GM12878 (cell line): ENCODE measurements at regions of chr16 and their contacts with region 1.

Region 1: DNA sequence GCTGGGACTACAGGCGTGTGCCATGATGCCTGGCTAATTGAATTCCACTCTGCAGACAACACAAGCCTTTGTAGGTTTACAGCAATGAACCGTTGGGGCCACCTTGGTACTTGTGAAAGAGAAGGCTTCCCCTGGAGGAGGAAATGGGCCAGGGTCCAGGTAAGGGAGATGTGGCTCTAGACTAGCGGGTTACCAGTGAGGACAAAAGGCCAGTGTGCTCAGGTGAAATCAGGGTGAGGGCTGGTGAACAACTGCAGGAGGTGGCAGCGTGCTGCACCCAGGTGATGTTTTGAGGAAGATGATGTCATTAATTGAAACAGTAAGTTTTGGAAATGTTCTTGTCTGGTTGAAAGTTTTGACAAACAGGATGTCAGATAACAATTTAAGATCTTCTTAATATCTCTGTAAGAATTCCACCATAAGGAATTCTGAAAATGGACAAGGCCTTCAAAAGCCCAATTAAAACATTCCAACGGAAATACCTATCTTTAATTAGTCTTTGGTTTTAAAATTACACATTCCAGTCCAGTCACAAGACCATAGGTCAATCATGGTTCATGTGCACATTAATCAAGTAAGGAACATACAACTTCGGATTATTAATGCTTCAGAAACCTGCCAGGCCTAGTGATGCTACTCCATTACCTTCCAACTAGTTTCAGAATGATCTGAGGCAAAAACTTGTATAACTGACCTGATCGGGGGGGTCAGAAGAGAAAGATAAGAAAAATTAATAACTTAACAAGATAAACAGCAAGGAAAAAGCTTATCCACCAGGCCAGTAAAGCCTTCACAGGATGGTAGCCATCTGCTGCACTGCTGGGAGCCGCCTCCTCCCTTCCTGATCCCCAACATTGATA is 6.4 kb downstream of the SDR42E1 start:
- DNase-seq: no peak
- ATAC-seq: no peak
- H3K4me3 ChIP-seq: no peak overlapping the region
- H3K27ac ChIP-seq: no peak overlapping the region
- H3K4me1 ChIP-seq: no peaks in the 10 kb centered on the region
- H3K27me3 ChIP-seq: no peaks in the 10 kb centered on the region
- CTCF ChIP-seq: no peak
- EP300 ChIP-seq: no peak
- POLR2A ChIP-seq: no peak
- RAD21 ChIP-seq: no peak

Region 2: DNA sequence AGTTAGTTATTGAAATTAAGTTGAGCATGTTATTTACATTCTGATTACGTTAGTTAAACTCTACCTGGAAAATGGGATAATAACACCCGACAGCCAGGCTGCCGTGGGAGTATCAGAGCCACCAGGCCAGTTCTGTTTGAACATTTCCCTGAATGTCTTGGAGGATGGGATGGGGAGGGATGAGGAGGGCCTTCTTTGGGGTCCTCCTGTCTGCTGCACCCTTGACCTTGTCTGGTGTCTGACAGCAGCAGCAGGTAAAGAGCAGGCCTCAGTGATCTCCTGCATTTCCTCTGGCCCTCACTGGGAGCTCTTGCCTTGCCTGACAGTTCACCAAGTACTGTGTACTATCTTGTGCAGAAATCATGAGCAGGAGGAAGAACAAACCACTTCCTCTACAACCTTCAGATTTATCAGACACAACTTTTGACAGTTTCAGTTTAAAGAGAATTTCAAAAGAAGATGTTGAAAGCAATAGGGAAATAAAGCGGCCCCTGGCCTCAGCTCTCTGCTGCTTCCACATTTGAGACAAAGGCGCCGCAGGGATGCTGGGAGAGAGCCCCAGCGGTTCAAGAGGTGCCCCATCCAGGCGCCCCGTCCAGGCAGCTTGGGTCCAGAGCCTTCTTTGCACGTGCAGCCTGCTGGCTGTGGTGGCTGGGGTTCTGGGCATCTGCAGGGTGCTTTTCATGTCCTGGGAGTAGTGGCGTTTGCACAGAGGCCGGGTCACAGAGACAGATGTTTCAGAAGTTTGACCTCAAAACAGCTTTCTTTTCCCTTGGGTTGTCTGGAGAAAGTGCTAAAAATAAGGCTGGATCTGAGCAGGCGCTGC is 534.9 kb before region 1 on chr16:
- CTCF ChIA-PET with region 1: no interaction called
- POLR2A ChIA-PET with region 1: no interaction called
- RAD21 ChIA-PET with region 1: no interaction called
- SMC1A ChIA-PET with region 1: no interaction called
- in situ Hi-C with region 1: no loop called
- intact Hi-C with region 1: no loop called
- DNase-seq: peak; percentile 65
- ATAC-seq: peak; percentile 90
- H3K4me3 ChIP-seq: peak overlapping the region; percentile 33; the same call in 1 of the 2 replicates
- H3K27ac ChIP-seq: peak overlapping the region; percentile 74
- H3K4me1 ChIP-seq: peaks cover 29% of the 10 kb centered on the region
- H3K27me3 ChIP-seq: no peaks in the 10 kb centered on the region
- CTCF ChIP-seq: no peak
- EP300 ChIP-seq: no peak
- POLR2A ChIP-seq: no peak
- RAD21 ChIP-seq: 0 out of 2 replicates have a peak, but pooled peaks have one; percentile 9

Region 3: GRCh38 chr16:81956213-81956948 is 48.5 kb before region 1 on chr16:
- CTCF ChIA-PET with region 1: no interaction called
- POLR2A ChIA-PET with region 1: no interaction called
- RAD21 ChIA-PET with region 1: no interaction called
- SMC1A ChIA-PET with region 1: no interaction called
- in situ Hi-C with region 1: loop called (anchors 5 kb)
- intact Hi-C with region 1: no loop called
- DNase-seq: no peak
- ATAC-seq: no peak
- H3K4me3 ChIP-seq: no peak overlapping the region
- H3K27ac ChIP-seq: no peak overlapping the region
- H3K4me1 ChIP-seq: no peaks in the 10 kb centered on the region
- H3K27me3 ChIP-seq: no peaks in the 10 kb centered on the region
- CTCF ChIP-seq: no peak
- EP300 ChIP-seq: no peak
- POLR2A ChIP-seq: no peak
- RAD21 ChIP-seq: no peak

Region 4: DNA sequence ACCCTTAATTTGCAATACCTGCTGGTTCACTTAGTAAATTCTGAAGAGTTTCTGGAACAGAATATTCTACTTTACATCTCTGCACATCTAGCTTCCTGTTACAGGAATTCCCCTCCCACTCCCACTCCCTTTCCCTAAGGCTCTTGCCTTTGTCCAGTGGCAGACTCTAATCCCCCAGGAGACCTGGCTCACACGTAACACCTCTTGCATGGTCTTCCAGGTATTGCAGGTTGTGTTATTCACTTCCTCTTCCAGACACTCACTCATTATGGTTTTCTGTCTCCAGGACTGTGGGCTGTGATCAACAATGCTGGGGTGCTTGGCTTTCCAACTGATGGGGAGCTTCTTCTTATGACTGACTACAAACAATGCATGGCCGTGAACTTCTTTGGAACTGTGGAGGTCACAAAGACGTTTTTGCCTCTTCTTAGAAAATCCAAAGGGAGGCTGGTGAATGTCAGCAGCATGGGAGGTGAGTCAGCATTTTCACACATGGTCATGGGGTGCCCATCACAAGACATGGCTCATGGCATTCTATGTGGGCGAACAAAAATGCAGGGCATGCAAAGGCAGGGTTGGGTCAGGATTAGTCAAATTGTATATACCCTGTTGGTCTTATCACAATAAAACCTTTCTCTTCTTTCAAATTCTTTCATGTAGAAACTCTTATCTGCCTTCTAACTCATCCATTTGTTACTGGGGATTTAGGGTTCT is 66.0 kb after region 1 on chr16:
- CTCF ChIA-PET with region 1: no interaction called
- POLR2A ChIA-PET with region 1: no interaction called
- RAD21 ChIA-PET with region 1: no interaction called
- SMC1A ChIA-PET with region 1: no interaction called
- in situ Hi-C with region 1: no loop called
- intact Hi-C with region 1: no loop called
- DNase-seq: no peak
- ATAC-seq: no peak
- H3K4me3 ChIP-seq: no peak overlapping the region
- H3K27ac ChIP-seq: no peak overlapping the region
- H3K4me1 ChIP-seq: no peaks in the 10 kb centered on the region
- H3K27me3 ChIP-seq: no peaks in the 10 kb centered on the region
- CTCF ChIP-seq: no peak
- EP300 ChIP-seq: no peak
- POLR2A ChIP-seq: no peak
- RAD21 ChIP-seq: no peak

Region 5: GRCh38 chr16:82111944-82112343 is 107.1 kb after region 1 on chr16:
- CTCF ChIA-PET with region 1: no interaction called
- POLR2A ChIA-PET with region 1: no interaction called
- RAD21 ChIA-PET with region 1: no interaction called
- SMC1A ChIA-PET with region 1: no interaction called
- in situ Hi-C with region 1: no loop called
- intact Hi-C with region 1: no loop called
- DNase-seq: no peak
- ATAC-seq: no peak
- H3K4me3 ChIP-seq: no peak overlapping the region
- H3K27ac ChIP-seq: no peak overlapping the region
- H3K4me1 ChIP-seq: no peaks in the 10 kb centered on the region
- H3K27me3 ChIP-seq: 0 out of 4 replicates have a peak, but pooled peaks cover 0 to 2% of the 10 kb centered on the region in 2 experiments
- CTCF ChIP-seq: no peak
- EP300 ChIP-seq: no peak
- POLR2A ChIP-seq: no peak
- RAD21 ChIP-seq: no peak